GM10248 (cell line): ENCODE measurements at regions of chr20 and their contacts with region 1.

Region 1: GRCh38 chr20:12925214-12925755 is 83.5 kb upstream of the SPTLC3 start:
- DNase-seq: peak; percentile 71
- CTCF ChIP-seq: peak; percentile 74

Region 2: GRCh38 chr20:12966468-12967341 is 41.4 kb after region 1 on chr20:
- CTCF ChIA-PET with region 1: interaction called, 15 read pairs
- POLR2A ChIA-PET with region 1: no interaction called
- DNase-seq: no peak
- CTCF ChIP-seq: no peak

Region 3: DNA sequence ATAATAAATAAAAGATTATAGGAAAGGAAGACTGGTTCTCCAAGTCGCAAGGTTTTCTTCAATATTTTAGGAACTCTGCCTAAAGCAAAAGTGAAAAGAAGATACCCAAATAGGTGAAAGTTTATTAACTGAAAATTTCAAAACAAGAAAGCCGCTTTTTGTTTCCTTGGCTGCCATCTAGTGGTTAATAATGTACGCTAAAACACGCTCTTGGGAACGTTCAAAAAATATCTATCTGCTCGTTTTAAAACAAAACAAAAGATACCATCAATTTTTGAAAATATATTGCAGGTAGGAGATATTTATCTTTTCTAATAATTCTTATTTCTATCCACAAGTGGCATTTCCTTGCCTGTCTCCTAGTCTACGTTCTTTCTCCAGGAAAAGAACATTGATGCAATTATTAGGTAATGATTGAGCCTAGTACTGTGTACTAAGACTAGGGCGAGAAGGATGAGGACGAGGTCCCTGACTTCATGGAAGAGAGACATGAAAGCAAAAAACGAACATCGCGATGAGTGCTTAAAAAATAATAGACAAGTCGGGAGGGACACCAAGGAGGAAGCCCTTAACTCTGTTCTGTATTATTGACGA is 180.7 kb after region 1 on chr20:
- CTCF ChIA-PET with region 1: interaction called, 21 read pairs
- POLR2A ChIA-PET with region 1: no interaction called
- DNase-seq: peak; percentile 35
- CTCF ChIP-seq: peak; percentile 55